ENCODE measurements at regions of chr9 and their contacts with region 1.

Region 1: DNA sequence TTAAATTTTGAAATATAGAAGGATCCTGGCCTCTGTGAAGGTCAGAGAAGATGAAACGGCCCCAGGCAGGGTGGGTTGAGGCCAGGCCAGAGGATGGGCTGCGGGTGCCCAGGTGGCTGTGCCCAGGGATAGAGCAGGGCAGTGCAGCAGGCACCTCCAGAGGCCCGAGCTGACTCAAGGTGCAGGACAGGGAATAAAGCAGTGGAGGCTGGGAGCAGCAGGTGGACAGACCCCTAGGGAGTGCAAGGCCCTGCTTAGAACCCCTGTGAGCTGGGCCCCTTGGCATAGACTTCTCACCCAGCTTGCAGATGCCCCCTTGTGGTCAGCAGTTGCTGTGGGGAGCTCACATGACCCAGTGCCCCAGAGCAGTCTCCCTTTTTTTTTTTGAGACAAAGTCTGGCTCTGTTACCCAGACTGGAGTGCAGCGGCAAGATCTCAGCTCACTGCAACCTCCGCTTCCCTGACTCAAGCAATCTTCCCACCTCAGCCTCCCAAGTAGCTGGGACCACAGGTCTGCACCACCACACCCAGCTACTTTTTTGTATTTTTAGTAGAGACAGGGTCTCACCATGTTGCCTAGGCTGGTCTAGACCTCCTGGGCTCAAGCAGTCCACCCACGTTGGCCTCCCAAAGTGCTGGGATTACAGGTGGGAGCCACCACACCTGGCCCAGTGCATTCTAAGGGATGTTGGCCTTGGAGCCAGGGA is 118.8 kb downstream of the WNK2 start:
- DNase-seq: peak; percentile 73
- ATAC-seq: peak; percentile 43
- H3K4me3 ChIP-seq: no peak overlapping the region
- H3K27ac ChIP-seq: peak overlapping the region; percentile 95
- H3K4me1 ChIP-seq: peaks cover 65% of the 10 kb centered on the region
- H3K27me3 ChIP-seq: no peaks in the 10 kb centered on the region
- CTCF ChIP-seq: peak; percentile 81
- EP300 ChIP-seq: no peak
- POLR2A ChIP-seq: no peak
- RAD21 ChIP-seq: peak; percentile 79; the same call in 1 of the 2 replicates

Region 2: DNA sequence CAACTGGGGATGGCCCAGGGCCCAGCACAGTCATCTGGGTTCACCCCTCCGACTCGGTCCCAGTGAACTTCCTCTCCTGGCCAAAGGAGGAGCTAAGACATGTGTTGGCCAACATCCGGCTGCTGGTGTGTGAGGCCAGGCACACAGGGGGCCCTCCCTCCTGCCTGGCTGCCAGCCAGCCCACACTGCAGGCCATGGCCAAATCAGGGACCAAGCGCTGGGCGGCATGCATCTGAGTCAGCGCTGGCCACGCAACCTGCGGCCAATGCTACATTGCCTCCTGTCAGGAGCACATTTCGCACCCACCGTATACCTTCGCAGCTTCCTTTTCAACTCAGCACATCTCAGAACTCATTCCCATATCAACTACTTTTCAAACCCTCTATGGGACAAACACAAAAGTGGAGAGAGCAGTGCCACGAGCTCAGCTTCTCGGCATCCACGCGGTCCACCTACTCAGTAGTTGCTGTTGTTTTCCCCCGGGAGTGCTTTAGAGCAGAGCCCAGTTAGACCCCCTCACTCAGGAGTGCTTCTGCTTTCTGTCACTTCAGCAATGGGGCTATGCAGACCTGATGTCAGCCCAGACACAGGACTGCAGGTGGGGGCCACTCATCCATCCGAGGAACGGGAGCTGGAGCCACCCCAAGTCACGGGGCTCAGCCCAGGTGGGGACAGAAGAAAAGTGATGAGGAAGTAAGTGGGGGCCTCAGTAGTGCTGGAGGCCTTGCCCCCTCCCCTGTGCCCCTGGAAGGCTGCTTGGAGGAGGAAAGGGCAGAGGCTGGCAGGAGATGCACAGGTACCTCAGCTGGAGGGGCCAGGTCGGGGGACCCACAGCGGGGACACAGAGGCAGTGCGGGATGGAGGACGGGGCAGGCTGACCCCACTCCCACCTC is 182.5 kb before region 1 on chr9:
- CTCF ChIA-PET with region 1: no interaction called
- POLR2A ChIA-PET with region 1: interaction called, 11 read pairs
- in situ Hi-C with region 1: no loop called
- intact Hi-C with region 1: no loop called
- DNase-seq: peak; percentile 94
- ATAC-seq: peak; percentile 88
- H3K4me3 ChIP-seq: peak overlapping the region in 1 of 3 experiments; percentile 53; a peak in 1 of 6 replicates
- H3K27ac ChIP-seq: peak overlapping the region; percentile 63
- H3K4me1 ChIP-seq: peaks cover 37% of the 10 kb centered on the region
- H3K27me3 ChIP-seq: no peaks in the 10 kb centered on the region
- CTCF ChIP-seq: peak; percentile 82
- EP300 ChIP-seq: peak in 1 of 2 experiments; percentile 76; a peak in 3 of 4 replicates
- POLR2A ChIP-seq: peak in 1 of 2 experiments; percentile 54; a peak in 1 of 4 replicates
- RAD21 ChIP-seq: peak; percentile 75; the same call in 1 of the 2 replicates

Region 3: GRCh38 chr9:93159601-93160471 is 142.9 kb before region 1 on chr9:
- CTCF ChIA-PET with region 1: interaction called, 23 read pairs
- POLR2A ChIA-PET with region 1: interaction called, 4 read pairs
- in situ Hi-C with region 1: loop called (anchors 5 kb)
- intact Hi-C with region 1: loop called (anchors 1 kb)
- DNase-seq: peak; percentile 76
- ATAC-seq: peak; percentile 96
- H3K4me3 ChIP-seq: peak overlapping the region in 1 of 3 experiments; percentile 44; a peak in 1 of 6 replicates
- H3K27ac ChIP-seq: no peak overlapping the region
- H3K4me1 ChIP-seq: peaks cover 39% of the 10 kb centered on the region
- H3K27me3 ChIP-seq: peaks cover 0 to 11% of the 10 kb centered on the region in 2 experiments; a peak in 2 of 5 replicates
- CTCF ChIP-seq: peak; percentile 99
- EP300 ChIP-seq: no peak
- POLR2A ChIP-seq: no peak
- RAD21 ChIP-seq: peak; percentile 97

Region 4: GRCh38 chr9:93223260-93224180 is 79.2 kb before region 1 on chr9:
- CTCF ChIA-PET with region 1: no interaction called
- POLR2A ChIA-PET with region 1: no interaction called
- in situ Hi-C with region 1: no loop called
- intact Hi-C with region 1: no loop called
- DNase-seq: no peak
- ATAC-seq: no peak
- H3K4me3 ChIP-seq: no peak overlapping the region
- H3K27ac ChIP-seq: no peak overlapping the region
- H3K4me1 ChIP-seq: peaks cover 22% of the 10 kb centered on the region
- H3K27me3 ChIP-seq: no peaks in the 10 kb centered on the region
- CTCF ChIP-seq: no peak
- EP300 ChIP-seq: no peak
- POLR2A ChIP-seq: no peak
- RAD21 ChIP-seq: no peak

Region 5: GRCh38 chr9:93254821-93255468 is 47.8 kb before region 1 on chr9:
- CTCF ChIA-PET with region 1: no interaction called
- POLR2A ChIA-PET with region 1: no interaction called
- in situ Hi-C with region 1: loop called (anchors 10 kb)
- intact Hi-C with region 1: no loop called
- DNase-seq: no peak
- ATAC-seq: no peak
- H3K4me3 ChIP-seq: no peak overlapping the region
- H3K27ac ChIP-seq: no peak overlapping the region
- H3K4me1 ChIP-seq: 0 out of 2 replicates have a peak, but pooled peaks cover 8% of the 10 kb centered on the region
- H3K27me3 ChIP-seq: no peaks in the 10 kb centered on the region; a peak in 1 of 5 replicates
- CTCF ChIP-seq: no peak
- EP300 ChIP-seq: no peak
- POLR2A ChIP-seq: no peak
- RAD21 ChIP-seq: no peak

Measured in HepG2 (cell line).